PC-9 (cell line): ENCODE measurements at regions of chr17 and their contacts with region 1.

Region 1: GRCh38 chr17:76671123-76671911 is 27.8 kb upstream of the ST6GALNAC1 start:
- DNase-seq: peak; percentile 96 to 99
- H3K4me3 ChIP-seq: peak overlapping the region; percentile 69; the same call in 1 of the 2 replicates
- H3K27ac ChIP-seq: peak overlapping the region; percentile 61
- H3K4me1 ChIP-seq: peaks cover 9% of the 10 kb centered on the region
- H3K27me3 ChIP-seq: no peaks in the 10 kb centered on the region
- CTCF ChIP-seq: no peak

Region 2: DNA sequence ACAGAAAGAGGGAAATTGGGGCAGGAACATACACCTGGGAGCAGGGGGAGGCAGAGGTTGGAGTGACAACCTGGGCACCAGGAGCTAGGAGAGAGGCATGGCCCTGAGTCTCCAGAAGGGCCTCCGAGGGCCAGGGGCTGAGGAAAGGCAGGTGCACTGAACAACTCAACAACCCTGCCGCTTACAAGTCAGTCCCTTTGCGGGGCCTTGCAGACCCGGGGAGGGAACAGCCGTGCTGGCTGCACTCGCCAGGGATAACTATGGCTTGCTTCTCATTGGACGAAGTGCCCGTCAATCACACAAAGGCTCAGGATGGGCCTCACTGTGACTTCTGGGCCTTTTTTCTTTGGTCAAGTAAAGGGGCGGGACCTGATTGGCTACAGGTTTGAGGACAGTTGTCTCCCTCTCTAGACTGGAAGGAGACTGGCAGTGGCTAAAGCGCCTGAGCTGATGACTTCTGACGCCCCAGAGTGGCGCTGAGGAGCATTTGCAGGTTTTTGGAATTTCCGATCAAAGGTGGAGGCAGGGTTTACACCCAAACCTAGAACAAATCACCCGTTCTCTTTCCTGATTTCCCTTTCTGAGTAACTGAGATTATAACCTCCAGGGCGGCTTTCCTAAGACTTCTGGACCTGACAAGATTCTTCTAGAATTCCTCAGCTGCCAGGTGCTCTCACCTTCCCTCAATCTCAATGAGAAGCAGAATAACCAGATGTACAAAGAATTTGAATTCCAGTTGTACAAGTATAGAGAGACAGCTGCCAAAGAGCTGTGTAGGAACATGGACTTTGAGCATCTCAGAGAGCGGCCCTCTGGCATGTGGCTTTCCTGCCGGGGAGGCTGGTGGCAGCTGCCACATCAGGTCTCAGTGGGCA is 58.1 kb before region 1 on chr17:
- CTCF ChIA-PET with region 1: interaction called, 4 read pairs
- POLR2A ChIA-PET with region 1: interaction called, 3 read pairs
- intact Hi-C with region 1: loop called (anchors 5 kb)
- DNase-seq: peak; percentile 94 to 95
- H3K4me3 ChIP-seq: no peak overlapping the region
- H3K27ac ChIP-seq: no peak overlapping the region
- H3K4me1 ChIP-seq: peaks cover 28% of the 10 kb centered on the region
- H3K27me3 ChIP-seq: no peaks in the 10 kb centered on the region
- CTCF ChIP-seq: peak; percentile 56

Region 3: GRCh38 chr17:76631829-76632565 is 39.3 kb before region 1 on chr17:
- CTCF ChIA-PET with region 1: no interaction called
- POLR2A ChIA-PET with region 1: no interaction called
- intact Hi-C with region 1: loop called (anchors 5 kb)
- DNase-seq: peak; percentile 52 to 60
- H3K4me3 ChIP-seq: no peak overlapping the region
- H3K27ac ChIP-seq: no peak overlapping the region
- H3K4me1 ChIP-seq: no peaks in the 10 kb centered on the region
- H3K27me3 ChIP-seq: no peaks in the 10 kb centered on the region
- CTCF ChIP-seq: no peak

Region 4: DNA sequence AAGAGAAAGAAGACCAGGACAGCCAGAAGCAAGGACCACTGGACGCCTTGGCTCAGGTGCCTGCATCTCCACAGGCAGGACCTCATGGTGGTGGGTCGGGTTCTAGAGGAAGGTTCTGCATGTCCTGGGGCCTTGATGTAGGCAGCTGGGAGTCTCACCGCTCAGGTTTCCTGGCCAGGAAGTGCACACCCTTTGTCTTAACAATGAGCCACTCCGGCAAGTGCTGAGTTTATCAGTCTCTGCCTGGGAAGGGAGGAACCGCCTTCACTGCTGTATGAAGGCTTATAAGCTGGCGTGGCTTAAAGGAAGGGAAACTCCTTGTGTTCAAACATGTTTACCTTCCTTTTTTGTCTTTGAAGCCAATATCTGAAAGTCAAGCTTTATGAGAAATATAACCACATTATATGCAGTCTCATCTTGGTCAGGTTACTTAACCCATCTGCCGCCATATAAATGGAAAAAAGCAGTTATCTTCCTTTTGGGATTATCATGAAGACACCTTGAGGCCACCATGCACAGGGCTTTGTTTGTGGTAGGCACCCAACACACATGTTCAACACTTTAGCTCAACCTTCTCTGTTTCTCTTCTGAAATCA is 27.7 kb before region 1 on chr17 and contains the start of gene ST6GALNAC1:
- CTCF ChIA-PET with region 1: no interaction called
- POLR2A ChIA-PET with region 1: interaction called, 9 read pairs
- intact Hi-C with region 1: loop called (anchors 1 kb)
- DNase-seq: peak in 1 of 2 experiments; percentile 39
- H3K4me3 ChIP-seq: no peak within 1 kb of the TSS
- H3K27ac ChIP-seq: no peak within 1 kb of the TSS
- H3K4me1 ChIP-seq: peaks cover 12% of the 10 kb centered on the region
- H3K27me3 ChIP-seq: no peaks in the 10 kb centered on the region
- CTCF ChIP-seq: no peak
- total RNA-seq, gene ST6GALNAC1: 0.75 and 0.76 TPM in 2 replicates

Region 5: GRCh38 chr17:76659928-76660614 is 11.2 kb before region 1 on chr17:
- CTCF ChIA-PET with region 1: no interaction called
- POLR2A ChIA-PET with region 1: interaction called, 21 read pairs
- intact Hi-C with region 1: no loop called
- DNase-seq: peak; percentile 55 to 72
- H3K4me3 ChIP-seq: no peak overlapping the region; the same call in 1 of the 2 replicates
- H3K27ac ChIP-seq: peak overlapping the region; percentile 54
- H3K4me1 ChIP-seq: peaks cover 25% of the 10 kb centered on the region
- H3K27me3 ChIP-seq: no peaks in the 10 kb centered on the region
- CTCF ChIP-seq: no peak

Region 6: GRCh38 chr17:76701471-76701967 is 30.2 kb after region 1 on chr17:
- CTCF ChIA-PET with region 1: no interaction called
- POLR2A ChIA-PET with region 1: no interaction called
- intact Hi-C with region 1: no loop called
- DNase-seq: no peak
- H3K4me3 ChIP-seq: no peak overlapping the region
- H3K27ac ChIP-seq: no peak overlapping the region
- H3K4me1 ChIP-seq: no peaks in the 10 kb centered on the region
- H3K27me3 ChIP-seq: no peaks in the 10 kb centered on the region
- CTCF ChIP-seq: no peak

Region 7: DNA sequence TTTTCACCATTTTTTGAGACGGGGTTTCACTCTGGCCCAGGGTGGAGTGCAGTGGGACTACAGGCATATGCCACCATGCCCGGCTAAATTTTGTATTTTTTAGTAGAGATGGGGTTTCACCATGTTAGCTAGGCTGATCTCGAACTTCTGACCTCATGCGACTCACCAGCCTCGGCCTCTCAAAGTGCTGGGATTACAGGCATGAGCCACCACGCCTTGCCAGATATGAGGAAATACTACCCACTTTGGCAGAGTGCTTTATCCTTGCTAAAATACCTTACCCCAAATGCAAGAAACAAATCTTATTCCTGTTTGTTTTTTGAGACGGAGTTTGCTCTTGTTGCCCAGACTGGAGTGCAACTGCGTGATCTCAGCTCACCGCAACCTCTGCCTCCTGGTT is 134.0 kb after region 1 on chr17:
- CTCF ChIA-PET with region 1: no interaction called
- POLR2A ChIA-PET with region 1: no interaction called
- intact Hi-C with region 1: no loop called
- DNase-seq: peak; percentile 15 to 42
- H3K4me3 ChIP-seq: no peak overlapping the region
- H3K27ac ChIP-seq: no peak overlapping the region
- H3K4me1 ChIP-seq: no peaks in the 10 kb centered on the region
- H3K27me3 ChIP-seq: no peaks in the 10 kb centered on the region
- CTCF ChIP-seq: no peak

Region 8: DNA sequence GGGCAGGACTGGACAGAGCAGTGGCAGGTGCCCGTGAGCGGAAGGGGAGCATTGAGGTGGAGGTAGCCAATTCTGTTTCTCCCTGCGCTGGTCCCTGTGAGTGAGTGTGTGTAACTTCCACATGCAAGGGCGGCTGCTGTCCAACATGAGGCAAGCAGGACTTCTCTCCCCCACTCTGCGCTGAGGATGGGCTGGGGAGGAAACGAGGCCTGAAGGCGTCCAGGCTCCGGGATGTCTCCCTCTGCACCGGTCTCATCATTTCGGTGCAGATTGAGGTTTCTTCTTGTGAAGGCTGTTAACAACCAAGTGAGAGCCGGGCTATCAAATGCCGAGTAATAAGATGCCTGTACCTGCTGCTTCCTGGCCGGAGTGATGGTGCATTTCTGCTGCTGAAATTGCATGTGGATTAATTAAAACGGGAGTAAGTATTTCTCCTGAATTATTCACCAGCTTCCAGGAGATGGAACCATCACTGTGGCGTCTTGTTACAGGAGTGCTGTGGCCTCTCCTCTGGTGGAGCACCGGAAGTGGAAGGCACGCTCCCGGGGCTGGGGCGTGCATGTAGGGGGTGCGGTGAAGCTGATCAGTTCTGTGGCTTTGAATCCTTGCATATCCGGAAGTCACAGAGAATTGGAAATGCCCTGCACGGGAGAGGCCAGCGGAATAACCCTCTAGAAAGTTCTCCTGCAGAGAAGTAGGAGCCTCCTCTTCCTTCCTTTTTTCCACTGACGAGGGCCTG is 155.2 kb after region 1 on chr17:
- CTCF ChIA-PET with region 1: interaction called, 12 read pairs
- POLR2A ChIA-PET with region 1: no interaction called
- intact Hi-C with region 1: no loop called
- DNase-seq: no peak
- H3K4me3 ChIP-seq: no peak overlapping the region
- H3K27ac ChIP-seq: no peak overlapping the region
- H3K4me1 ChIP-seq: no peaks in the 10 kb centered on the region
- H3K27me3 ChIP-seq: no peaks in the 10 kb centered on the region
- CTCF ChIP-seq: no peak

Region 9: GRCh38 chr17:78324391-78325075 is 1653.2 kb after region 1 on chr17:
- CTCF ChIA-PET with region 1: no interaction called
- POLR2A ChIA-PET with region 1: no interaction called
- intact Hi-C with region 1: no loop called
- DNase-seq: no peak
- H3K4me3 ChIP-seq: no peak overlapping the region
- H3K27ac ChIP-seq: no peak overlapping the region
- H3K4me1 ChIP-seq: peaks cover 16% of the 10 kb centered on the region
- H3K27me3 ChIP-seq: no peaks in the 10 kb centered on the region
- CTCF ChIP-seq: no peak